ENCODE measurements at regions of chr9 and their contacts with region 1.

Region 1: DNA sequence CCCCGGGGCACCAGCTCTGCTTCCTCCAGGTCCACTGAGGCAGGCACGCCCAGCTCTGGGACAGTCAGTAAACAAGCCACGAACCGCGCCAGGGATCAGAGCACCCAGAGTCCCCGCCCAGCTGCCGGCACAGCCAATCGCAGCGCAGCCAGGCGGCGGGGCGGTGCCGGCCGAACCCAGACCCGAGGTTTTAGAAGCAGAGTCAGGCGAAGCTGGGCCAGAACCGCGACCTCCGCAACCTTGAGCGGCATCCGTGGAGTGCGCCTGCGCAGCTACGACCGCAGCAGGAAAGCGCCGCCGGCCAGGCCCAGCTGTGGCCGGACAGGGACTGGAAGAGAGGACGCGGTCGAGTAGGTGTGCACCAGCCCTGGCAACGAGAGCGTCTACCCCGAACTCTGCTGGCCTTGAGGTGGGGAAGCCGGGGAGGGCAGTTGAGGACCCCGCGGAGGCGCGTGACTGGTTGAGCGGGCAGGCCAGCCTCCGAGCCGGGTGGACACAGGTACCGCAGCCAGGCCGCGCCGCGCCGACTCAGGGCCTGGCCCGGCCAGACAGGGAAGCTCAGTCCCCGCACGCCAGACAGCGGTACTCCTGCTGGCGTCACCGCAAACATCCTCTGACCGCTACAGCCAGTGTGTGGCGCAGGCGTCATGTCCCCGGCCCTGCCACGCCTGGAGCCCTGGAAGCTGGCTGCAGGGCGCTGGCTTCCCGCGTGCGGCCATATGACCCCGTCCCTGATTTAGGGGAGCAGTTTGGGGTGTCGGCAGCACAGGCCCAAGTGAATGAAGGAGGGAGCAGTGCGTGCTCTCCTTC is at the start of gene CTSL:
- DNase-seq: peak; percentile 26 to 56 (median 44)
- H3K4me3 ChIP-seq: peak within 1 kb of the TSS; percentile 36 to 51
- H3K4me3 Mint-ChIP-seq: peak within 1 kb of the TSS; percentile 87 to 95 (median 89)
- H3K27ac ChIP-seq: no peak within 1 kb of the TSS
- H3K27ac Mint-ChIP-seq: peak within 1 kb of the TSS; percentile 71 to 90 (median 79)
- H3K4me1 ChIP-seq: peaks cover 20% of the 10 kb centered on the region
- H3K4me1 Mint-ChIP-seq: peaks cover 6 to 28% (median 24%) of the 10 kb centered on the region in 4 donors
- H3K27me3 ChIP-seq: no peaks in the 10 kb centered on the region
- H3K27me3 Mint-ChIP-seq: no peaks in the 10 kb centered on the region
- total RNA-seq, gene CTSL: 65.7 to 71.4 TPM

Region 2: DNA sequence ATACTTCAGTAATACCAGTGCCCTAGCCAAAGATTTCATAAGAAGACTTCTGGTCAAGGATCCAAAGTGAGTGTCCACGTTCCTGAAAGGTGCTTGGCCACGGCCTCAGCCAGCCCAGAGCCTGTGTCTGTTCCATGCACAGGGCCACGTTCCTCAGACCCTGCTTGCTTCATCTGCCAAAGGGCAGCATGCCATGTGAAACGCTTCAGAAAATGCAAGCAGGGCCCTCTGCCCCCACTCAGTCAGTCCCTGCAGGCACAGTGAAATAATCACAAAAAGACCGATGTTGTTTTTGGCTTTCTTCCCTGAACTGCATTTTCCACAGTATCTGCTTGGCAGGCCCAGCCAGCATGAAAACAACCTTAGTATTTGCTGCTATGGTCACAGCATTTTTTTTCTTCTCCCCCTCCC is 85.7 kb before region 1 on chr9:
- CTCF ChIA-PET with region 1: no interaction called
- POLR2A ChIA-PET with region 1: no interaction called
- intact Hi-C with region 1: no loop called
- DNase-seq: no peak
- H3K4me3 ChIP-seq: no peak overlapping the region
- H3K4me3 Mint-ChIP-seq: no peak overlapping the region
- H3K27ac ChIP-seq: no peak overlapping the region
- H3K27ac Mint-ChIP-seq: no peak overlapping the region
- H3K4me1 ChIP-seq: no peaks in the 10 kb centered on the region
- H3K4me1 Mint-ChIP-seq: no peaks in the 10 kb centered on the region
- H3K27me3 ChIP-seq: no peaks in the 10 kb centered on the region
- H3K27me3 Mint-ChIP-seq: peaks cover 0 to 6% of the 10 kb centered on the region in 2 donors

Region 3: DNA sequence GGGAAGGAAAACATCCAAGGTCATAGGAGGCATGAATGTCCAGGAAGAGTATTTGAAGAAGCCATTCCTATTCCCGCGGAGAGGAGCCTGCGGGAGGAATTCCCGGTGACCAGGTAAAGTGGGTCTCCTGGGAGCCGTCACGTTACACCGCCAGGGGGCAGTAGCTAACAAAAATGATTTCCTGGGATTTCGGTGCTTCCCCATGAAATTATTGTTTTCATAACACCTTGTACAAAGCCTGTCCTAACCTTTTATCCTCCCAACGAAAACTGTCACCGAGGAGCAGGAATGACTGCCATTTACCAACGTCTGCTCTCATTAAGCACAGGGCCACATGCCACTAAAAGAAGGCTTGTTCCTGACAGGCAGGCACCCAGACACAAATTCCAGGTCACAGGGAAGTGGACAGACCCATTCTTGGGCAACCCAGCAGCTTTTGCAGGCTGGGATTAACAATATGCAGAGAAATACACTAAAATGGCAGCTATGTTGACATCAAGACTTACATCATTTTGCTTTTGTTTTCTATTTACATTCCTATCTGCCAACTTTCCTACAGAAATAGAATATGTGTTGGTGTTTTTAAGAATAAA is 41.4 kb before region 1 on chr9:
- CTCF ChIA-PET with region 1: interaction called, 5 read pairs
- POLR2A ChIA-PET with region 1: no interaction called
- intact Hi-C with region 1: loop called (anchors 5 kb)
- DNase-seq: no peak
- H3K4me3 ChIP-seq: no peak overlapping the region
- H3K4me3 Mint-ChIP-seq: no peak overlapping the region
- H3K27ac ChIP-seq: no peak overlapping the region
- H3K27ac Mint-ChIP-seq: peak overlapping the region in 1 of 7 donors; percentile 89
- H3K4me1 ChIP-seq: peaks cover 21% of the 10 kb centered on the region
- H3K4me1 Mint-ChIP-seq: peaks cover 12 to 36% (median 19%) of the 10 kb centered on the region in 4 donors
- H3K27me3 ChIP-seq: no peaks in the 10 kb centered on the region
- H3K27me3 Mint-ChIP-seq: no peaks in the 10 kb centered on the region

Region 4: DNA sequence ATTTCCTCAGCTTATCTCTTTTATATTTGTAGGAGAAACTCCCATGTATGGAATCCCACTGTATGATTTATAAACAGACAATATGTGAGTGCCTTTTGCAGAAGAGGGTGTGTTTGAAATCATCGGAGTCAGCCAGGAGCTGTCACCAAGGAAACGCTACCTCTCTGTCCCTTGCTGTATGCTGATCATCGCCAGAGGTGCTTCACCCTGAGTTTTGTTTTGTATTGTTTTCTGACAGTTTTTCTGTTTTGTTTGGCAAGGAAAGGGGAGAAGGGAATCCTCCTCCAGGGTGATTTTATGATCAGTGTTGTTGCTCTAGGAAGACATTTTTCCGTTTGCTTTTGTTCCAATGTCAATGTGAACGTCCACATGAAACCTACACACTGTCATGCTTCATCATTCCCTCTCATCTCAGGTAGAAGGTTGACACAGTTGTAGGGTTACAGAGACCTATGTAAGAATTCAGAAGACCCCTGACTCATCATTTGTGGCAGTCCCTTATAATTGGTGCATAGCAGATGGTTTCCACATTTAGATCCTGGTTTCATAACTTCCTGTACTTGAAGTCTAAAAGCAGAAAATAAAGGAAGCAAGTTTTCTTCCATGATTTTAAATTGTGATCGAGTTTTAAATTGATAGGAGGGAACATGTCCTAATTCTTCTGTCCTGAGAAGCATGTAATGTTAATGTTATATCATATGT is 18.1 kb before region 1 on chr9:
- CTCF ChIA-PET with region 1: interaction called, 6 read pairs
- POLR2A ChIA-PET with region 1: interaction called, 20 read pairs
- intact Hi-C with region 1: loop called (anchors 2 kb)
- DNase-seq: no peak
- H3K4me3 ChIP-seq: no peak overlapping the region
- H3K4me3 Mint-ChIP-seq: peak overlapping the region in 3 of 8 donors; percentile 17 to 43 (median 35)
- H3K27ac ChIP-seq: no peak overlapping the region
- H3K27ac Mint-ChIP-seq: peak overlapping the region in 2 of 7 donors; percentile 8 to 24
- H3K4me1 ChIP-seq: peaks cover 46% of the 10 kb centered on the region
- H3K4me1 Mint-ChIP-seq: peaks cover 19 to 36% (median 32%) of the 10 kb centered on the region in 4 donors
- H3K27me3 ChIP-seq: no peaks in the 10 kb centered on the region
- H3K27me3 Mint-ChIP-seq: no peaks in the 10 kb centered on the region

Region 5: GRCh38 chr9:87973730-87974292 is 247.7 kb after region 1 on chr9:
- CTCF ChIA-PET with region 1: no interaction called
- POLR2A ChIA-PET with region 1: interaction called, 7 read pairs
- intact Hi-C with region 1: loop called (anchors 10 kb)
- DNase-seq: peak in 1 of 5 donors; percentile 24
- H3K4me3 ChIP-seq: peak overlapping the region; percentile 14 to 96
- H3K4me3 Mint-ChIP-seq: peak overlapping the region; percentile 92 to 99 (median 96)
- H3K27ac ChIP-seq: peak overlapping the region; percentile 87
- H3K27ac Mint-ChIP-seq: peak overlapping the region; percentile 95 to 100 (median 99)
- H3K4me1 ChIP-seq: peaks cover 17% of the 10 kb centered on the region
- H3K4me1 Mint-ChIP-seq: peaks cover 16 to 35% (median 29%) of the 10 kb centered on the region in 4 donors
- H3K27me3 ChIP-seq: no peaks in the 10 kb centered on the region
- H3K27me3 Mint-ChIP-seq: peaks cover 0 to 2% of the 10 kb centered on the region in 2 donors